Activated CD8-positive, alpha-beta T cell treated with anti-CD3 and anti-CD28 coated beads for 36 hours (primary cell): ENCODE measurements at regions of chr12 and their contacts with region 1.

Region 1: GRCh38 chr12:111444925-111445725 is 39.4 kb downstream of the SH2B3 start:
- DNase-seq: peak; percentile 96
- ATAC-seq: peak; percentile 90
- H3K4me3 Mint-ChIP-seq: peak overlapping the region; percentile 26
- H3K27ac Mint-ChIP-seq: peak overlapping the region; percentile 69
- H3K4me1 Mint-ChIP-seq: peaks cover 85% of the 10 kb centered on the region
- H3K27me3 Mint-ChIP-seq: no peaks in the 10 kb centered on the region
- CTCF ChIP-seq: no peak

Region 2: DNA sequence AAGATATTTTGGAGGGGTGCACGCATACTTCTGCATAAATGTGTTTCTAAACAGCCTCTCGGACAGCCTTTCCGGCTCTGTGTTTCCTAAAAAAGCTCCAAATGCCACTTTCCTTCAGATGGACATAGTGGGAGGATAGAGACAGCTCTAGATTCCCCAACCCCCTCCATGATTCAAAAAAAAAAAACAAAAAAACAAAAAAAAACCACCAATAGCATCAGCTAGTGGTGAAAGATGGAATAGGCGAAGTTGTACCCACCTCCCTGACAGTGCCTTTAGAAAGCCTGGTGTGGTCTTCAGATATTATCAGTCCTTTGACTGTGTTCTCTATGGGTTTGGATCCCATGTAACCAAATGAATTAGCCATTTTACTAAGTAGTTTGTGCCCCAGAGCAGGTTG is 170.3 kb before region 1 on chr12:
- CTCF ChIA-PET with region 1: no interaction called
- POLR2A ChIA-PET with region 1: no interaction called
- intact Hi-C with region 1: no loop called
- DNase-seq: no peak
- ATAC-seq: no peak
- H3K4me3 Mint-ChIP-seq: no peak overlapping the region
- H3K27ac Mint-ChIP-seq: no peak overlapping the region
- H3K4me1 Mint-ChIP-seq: no peaks in the 10 kb centered on the region
- H3K27me3 Mint-ChIP-seq: peaks cover 8% of the 10 kb centered on the region
- CTCF ChIP-seq: no peak

Region 3: DNA sequence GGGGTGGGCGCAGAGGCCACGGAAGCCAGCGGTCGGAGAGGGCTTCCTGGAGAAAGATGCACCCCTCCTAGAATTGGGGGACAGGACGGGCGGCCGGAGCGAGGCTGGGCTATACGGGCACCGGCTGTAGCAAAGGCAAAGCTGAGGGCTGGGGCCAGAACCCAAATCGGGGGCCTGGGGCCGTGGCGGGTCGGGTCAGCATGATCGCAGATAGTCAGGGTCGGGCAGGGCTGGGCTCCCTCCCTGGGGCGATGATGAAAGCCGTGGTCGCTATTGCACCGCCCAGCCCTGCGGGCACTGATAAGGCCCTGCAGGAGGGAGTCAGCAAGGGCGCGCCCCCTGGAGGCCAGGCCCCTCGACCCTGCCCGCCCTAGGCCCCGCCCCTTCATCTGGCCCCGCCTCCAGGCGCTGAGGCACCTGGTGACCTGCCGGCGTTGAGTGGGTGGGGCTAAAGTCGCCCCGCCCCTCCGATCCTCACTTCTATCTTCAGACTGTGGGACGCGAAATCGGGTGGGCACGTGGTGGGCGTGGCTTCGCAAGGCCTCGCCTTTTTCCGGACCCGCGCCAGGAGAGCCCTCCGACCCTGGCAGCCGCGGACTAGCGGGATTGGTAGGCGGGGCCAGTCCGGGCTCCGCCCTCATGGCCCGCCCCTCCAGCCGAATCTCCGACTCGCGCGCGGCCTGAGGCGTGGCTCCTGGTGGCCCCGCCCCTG is 39.8 kb before region 1 on chr12:
- CTCF ChIA-PET with region 1: interaction called, 1,222 read pairs
- POLR2A ChIA-PET with region 1: interaction called, 89 read pairs
- intact Hi-C with region 1: loop called (anchors 5 kb)
- DNase-seq: peak; percentile 100
- ATAC-seq: peak; percentile 81
- H3K4me3 Mint-ChIP-seq: peak overlapping the region; percentile 73
- H3K27ac Mint-ChIP-seq: peak overlapping the region; percentile 96
- H3K4me1 Mint-ChIP-seq: peaks cover 50% of the 10 kb centered on the region
- H3K27me3 Mint-ChIP-seq: no peaks in the 10 kb centered on the region
- CTCF ChIP-seq: peak; percentile 58

Region 4: GRCh38 chr12:111412007-111412829 is 32.9 kb before region 1 on chr12:
- CTCF ChIA-PET with region 1: interaction called, 1,222 read pairs
- POLR2A ChIA-PET with region 1: interaction called, 89 read pairs
- intact Hi-C with region 1: no loop called
- DNase-seq: no peak
- ATAC-seq: peak; percentile 18
- H3K4me3 Mint-ChIP-seq: peak overlapping the region; percentile 40
- H3K27ac Mint-ChIP-seq: peak overlapping the region; percentile 80
- H3K4me1 Mint-ChIP-seq: peaks cover 75% of the 10 kb centered on the region
- H3K27me3 Mint-ChIP-seq: no peaks in the 10 kb centered on the region
- CTCF ChIP-seq: no peak

Region 5: DNA sequence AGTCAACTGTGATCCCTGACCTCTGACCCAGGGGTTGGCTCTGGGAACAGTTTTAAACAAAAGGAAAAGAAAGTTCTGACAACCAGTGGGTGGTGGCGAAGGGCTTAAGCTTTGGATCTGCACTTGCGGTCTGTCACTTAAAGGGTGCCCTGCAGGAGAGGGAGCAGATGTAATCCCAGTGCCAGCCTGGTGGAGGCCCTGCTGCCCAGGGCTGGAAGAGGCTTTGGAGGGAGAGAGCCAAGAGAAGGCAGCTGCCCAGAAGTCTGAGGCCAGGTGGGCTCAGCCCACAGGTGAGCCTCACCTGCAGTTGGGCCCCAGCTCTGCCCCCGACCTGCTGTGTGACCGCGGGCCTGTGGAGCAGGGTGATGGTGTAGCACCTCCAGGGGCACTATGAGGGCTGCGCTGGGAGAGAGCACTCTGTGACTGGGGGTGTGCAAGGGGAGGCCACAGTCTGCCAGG is 20.3 kb before region 1 on chr12:
- CTCF ChIA-PET with region 1: interaction called, 44 read pairs
- POLR2A ChIA-PET with region 1: interaction called, 41 read pairs
- intact Hi-C with region 1: loop called (anchors 2 kb)
- DNase-seq: peak; percentile 40
- ATAC-seq: no peak
- H3K4me3 Mint-ChIP-seq: no peak overlapping the region
- H3K27ac Mint-ChIP-seq: peak overlapping the region; percentile 80
- H3K4me1 Mint-ChIP-seq: peaks cover 63% of the 10 kb centered on the region
- H3K27me3 Mint-ChIP-seq: no peaks in the 10 kb centered on the region
- CTCF ChIP-seq: peak; percentile 46

Region 6: DNA sequence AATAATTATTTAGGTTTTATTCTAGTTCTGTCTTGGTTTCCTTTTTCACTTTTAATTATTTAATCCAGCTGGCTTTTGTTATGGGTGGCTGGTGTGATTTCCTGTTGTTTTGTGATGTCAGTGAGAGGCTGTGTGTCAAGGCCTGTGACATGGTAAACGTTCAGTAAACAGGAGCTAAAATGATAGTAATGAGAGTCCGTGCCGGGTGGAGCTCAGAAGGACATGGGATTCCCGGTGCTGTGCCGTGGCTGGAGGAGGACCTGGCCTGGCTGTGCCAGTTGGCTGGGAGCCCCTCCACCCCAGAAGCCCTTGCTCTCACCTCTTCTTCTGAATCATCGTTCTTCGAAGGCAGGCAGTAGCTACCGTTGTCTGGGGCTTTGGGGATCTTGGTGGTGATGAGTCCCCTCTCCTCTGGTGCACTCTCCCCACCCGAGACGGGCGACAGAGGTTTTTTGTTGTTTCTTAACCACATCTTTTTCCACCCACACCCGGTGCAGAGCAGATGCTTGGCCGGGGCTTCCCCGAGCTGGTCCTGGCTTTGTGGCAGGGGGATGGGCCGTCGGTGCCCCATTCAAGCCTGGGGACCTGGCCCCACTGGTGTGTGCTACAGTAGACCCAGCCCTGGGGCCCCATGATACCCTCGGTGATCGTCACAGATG is 10.3 kb before region 1 on chr12:
- CTCF ChIA-PET with region 1: interaction called, 44 read pairs
- POLR2A ChIA-PET with region 1: interaction called, 41 read pairs
- intact Hi-C with region 1: loop called (anchors 2 kb)
- DNase-seq: peak; percentile 94
- ATAC-seq: peak; percentile 73
- H3K4me3 Mint-ChIP-seq: peak overlapping the region; percentile 62
- H3K27ac Mint-ChIP-seq: peak overlapping the region; percentile 95
- H3K4me1 Mint-ChIP-seq: peaks cover 86% of the 10 kb centered on the region
- H3K27me3 Mint-ChIP-seq: no peaks in the 10 kb centered on the region
- CTCF ChIP-seq: no peak

Region 7: GRCh38 chr12:111471236-111471635 is 26.1 kb after region 1 on chr12:
- CTCF ChIA-PET with region 1: no interaction called
- POLR2A ChIA-PET with region 1: no interaction called
- intact Hi-C with region 1: no loop called
- DNase-seq: no peak
- ATAC-seq: no peak
- H3K4me3 Mint-ChIP-seq: no peak overlapping the region
- H3K27ac Mint-ChIP-seq: no peak overlapping the region
- H3K4me1 Mint-ChIP-seq: peaks cover 7% of the 10 kb centered on the region
- H3K27me3 Mint-ChIP-seq: no peaks in the 10 kb centered on the region
- CTCF ChIP-seq: no peak